HEK293T (cell line): ENCODE measurements at regions of chr15 and their contacts with region 1.

Region 1: GRCh38 chr15:45573961-45574629 is 13.1 kb upstream of the BLOC1S6 start:
- DNase-seq: no peak

Region 2: GRCh38 chr15:45587095-45587860 is 13.2 kb after region 1 on chr15 and contains the start of gene BLOC1S6:
- CTCF ChIA-PET with region 1: interaction called, 4 read pairs
- POLR2A ChIA-PET with region 1: interaction called, 13 read pairs
- DNase-seq: peak; percentile 67